Mammary epithelial cell (primary cell): ENCODE measurements at regions of chr10 and their contacts with region 1.

Region 1: GRCh38 chr10:45302573-45302972 is 12.8 kb downstream of the OR13A1 start:
- DNase-seq: peak; percentile 4
- H3K4me3 ChIP-seq: no peak overlapping the region
- H3K27ac ChIP-seq: no peak overlapping the region
- H3K4me1 ChIP-seq: no peaks in the 10 kb centered on the region
- H3K27me3 ChIP-seq: no peaks in the 10 kb centered on the region
- CTCF ChIP-seq: no peak

Region 2: GRCh38 chr10:45151467-45152214 is 150.9 kb before region 1 on chr10:
- CTCF ChIA-PET with region 1: no interaction called
- dilution Hi-C with region 1: no loop called
- in situ Hi-C with region 1: no loop called
- intact Hi-C with region 1: no loop called
- DNase-seq: no peak
- H3K4me3 ChIP-seq: no peak overlapping the region
- H3K27ac ChIP-seq: peak overlapping the region; percentile 40
- H3K4me1 ChIP-seq: peaks cover 13% of the 10 kb centered on the region
- H3K27me3 ChIP-seq: no peaks in the 10 kb centered on the region
- CTCF ChIP-seq: no peak

Region 3: DNA sequence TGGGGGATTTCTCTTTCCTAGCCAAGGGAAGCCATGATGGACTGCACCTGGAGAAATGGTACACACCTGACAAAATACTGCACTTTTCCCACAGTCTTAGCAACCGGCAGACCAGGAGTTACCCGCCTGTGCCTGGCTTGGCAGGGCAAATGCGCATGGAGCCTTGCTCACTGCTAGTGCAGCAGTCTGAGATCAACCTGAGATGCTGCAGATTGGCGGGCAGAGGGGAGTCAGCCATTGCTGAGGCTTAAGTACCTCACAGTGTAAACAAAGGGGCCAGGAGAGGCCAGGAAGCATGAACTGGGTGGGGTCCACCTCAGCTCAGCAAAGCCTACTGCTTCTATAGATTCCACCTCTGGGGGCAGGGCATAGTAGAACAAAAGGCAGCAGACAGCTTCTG is 36.6 kb before region 1 on chr10:
- CTCF ChIA-PET with region 1: no interaction called
- dilution Hi-C with region 1: loop called (anchors 5 kb)
- in situ Hi-C with region 1: no loop called
- intact Hi-C with region 1: no loop called
- DNase-seq: no peak
- H3K4me3 ChIP-seq: no peak overlapping the region
- H3K27ac ChIP-seq: no peak overlapping the region
- H3K4me1 ChIP-seq: no peaks in the 10 kb centered on the region
- H3K27me3 ChIP-seq: peaks cover 3% of the 10 kb centered on the region
- CTCF ChIP-seq: no peak

Region 4: DNA sequence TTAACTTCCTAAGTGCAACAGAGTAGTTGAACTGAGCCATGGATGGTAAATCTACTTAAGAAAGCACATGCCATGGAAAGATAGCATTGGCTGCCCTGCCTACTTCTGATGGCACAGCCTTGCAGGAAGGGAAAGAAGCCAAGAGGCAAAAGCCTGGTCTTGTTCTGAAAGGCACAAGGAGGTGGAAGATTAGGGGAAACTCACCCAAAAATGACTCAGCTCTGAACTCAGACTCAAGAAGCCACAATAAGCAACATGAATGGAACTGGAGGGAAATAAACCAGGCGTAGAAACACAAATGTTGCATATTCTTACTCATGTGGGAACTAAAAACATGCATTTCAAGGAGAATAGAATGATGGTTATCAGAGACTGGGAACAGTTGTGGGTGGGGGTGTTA is 50.6 kb after region 1 on chr10:
- CTCF ChIA-PET with region 1: no interaction called
- dilution Hi-C with region 1: no loop called
- in situ Hi-C with region 1: no loop called
- intact Hi-C with region 1: no loop called
- DNase-seq: peak; percentile 58
- H3K4me3 ChIP-seq: no peak overlapping the region
- H3K27ac ChIP-seq: no peak overlapping the region
- H3K4me1 ChIP-seq: no peaks in the 10 kb centered on the region
- H3K27me3 ChIP-seq: no peaks in the 10 kb centered on the region
- CTCF ChIP-seq: no peak